ENCODE measurements at regions of chr6 and their contacts with region 1.

Region 1: GRCh38 chr6:146670161-146670560 is 71.4 kb downstream of the ADGB start:
- DNase-seq: no peak
- H3K4me3 ChIP-seq: no peak overlapping the region
- H3K27ac ChIP-seq: no peak overlapping the region
- H3K4me1 ChIP-seq: no peaks in the 10 kb centered on the region
- H3K27me3 ChIP-seq: peaks cover 10% of the 10 kb centered on the region
- CTCF ChIP-seq: no peak

Region 2: DNA sequence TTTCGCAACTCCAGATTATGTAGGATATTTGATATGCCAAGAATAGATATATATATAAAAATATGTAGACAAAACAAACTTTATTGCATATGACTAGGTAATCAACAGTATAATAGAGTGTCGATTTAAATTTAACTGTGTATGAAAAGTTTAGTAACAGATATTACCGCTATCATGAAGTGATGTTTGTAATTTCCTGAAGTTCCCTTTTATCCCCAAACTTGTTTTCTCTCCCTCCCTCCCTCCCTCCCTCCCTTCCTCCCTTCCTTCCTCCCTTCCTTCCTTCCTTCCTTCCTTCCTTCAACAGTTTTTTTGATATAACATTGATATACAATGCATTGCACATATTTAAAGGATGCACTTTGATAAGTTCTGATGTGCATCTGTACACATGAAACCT is 56.2 kb before region 1 on chr6:
- CTCF ChIA-PET with region 1: no interaction called
- dilution Hi-C with region 1: loop called (anchors 5 kb)
- in situ Hi-C with region 1: no loop called
- intact Hi-C with region 1: no loop called
- DNase-seq: no peak
- H3K4me3 ChIP-seq: no peak overlapping the region
- H3K27ac ChIP-seq: no peak overlapping the region
- H3K4me1 ChIP-seq: no peaks in the 10 kb centered on the region
- H3K27me3 ChIP-seq: peaks cover 2% of the 10 kb centered on the region
- CTCF ChIP-seq: no peak

Region 3: DNA sequence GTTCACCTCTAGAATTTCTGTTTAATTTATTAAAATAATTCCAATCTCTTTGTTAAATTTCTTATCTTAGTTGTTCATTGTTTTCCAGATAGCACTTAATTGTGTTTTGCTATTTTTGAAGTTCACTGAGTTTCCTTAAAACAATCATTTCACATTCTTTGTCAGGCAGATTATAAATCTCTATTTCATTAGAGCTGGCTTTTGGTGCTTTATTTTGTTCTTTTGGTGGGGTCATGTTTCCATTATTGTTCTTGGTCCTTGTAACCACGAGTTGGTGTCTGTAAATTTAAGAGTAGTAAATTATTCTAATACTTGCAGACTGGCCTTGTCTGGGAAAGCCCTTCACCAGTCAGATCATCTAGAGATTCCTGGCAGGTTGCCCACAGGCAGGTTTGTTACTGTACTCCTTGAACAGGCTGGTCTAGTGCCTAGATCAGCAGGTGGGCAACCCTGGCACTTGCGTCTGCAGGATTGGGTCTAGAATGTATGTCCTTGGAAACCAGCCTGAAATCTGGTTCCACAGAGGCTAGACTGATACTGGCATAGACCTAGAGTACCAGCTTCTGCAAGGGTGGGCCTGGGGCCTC is 39.0 kb after region 1 on chr6:
- CTCF ChIA-PET with region 1: no interaction called
- dilution Hi-C with region 1: no loop called
- in situ Hi-C with region 1: no loop called
- intact Hi-C with region 1: no loop called
- DNase-seq: no peak
- H3K4me3 ChIP-seq: no peak overlapping the region
- H3K27ac ChIP-seq: no peak overlapping the region
- H3K4me1 ChIP-seq: no peaks in the 10 kb centered on the region
- H3K27me3 ChIP-seq: no peaks in the 10 kb centered on the region
- CTCF ChIP-seq: no peak

Region 4: GRCh38 chr6:146719387-146719786 is 49.2 kb after region 1 on chr6:
- CTCF ChIA-PET with region 1: no interaction called
- dilution Hi-C with region 1: loop called (anchors 5 kb)
- in situ Hi-C with region 1: no loop called
- intact Hi-C with region 1: no loop called
- DNase-seq: no peak
- H3K4me3 ChIP-seq: no peak overlapping the region
- H3K27ac ChIP-seq: no peak overlapping the region
- H3K4me1 ChIP-seq: no peaks in the 10 kb centered on the region
- H3K27me3 ChIP-seq: no peaks in the 10 kb centered on the region
- CTCF ChIP-seq: no peak